Cardiac septum (tissue), 1 donor: ENCODE measurements at regions of chr20 and their contacts with region 1.

Region 1: GRCh38 chr20:815914-816606 is 17.5 kb upstream of the FAM110A start:
- DNase-seq: no peak

Region 2: DNA sequence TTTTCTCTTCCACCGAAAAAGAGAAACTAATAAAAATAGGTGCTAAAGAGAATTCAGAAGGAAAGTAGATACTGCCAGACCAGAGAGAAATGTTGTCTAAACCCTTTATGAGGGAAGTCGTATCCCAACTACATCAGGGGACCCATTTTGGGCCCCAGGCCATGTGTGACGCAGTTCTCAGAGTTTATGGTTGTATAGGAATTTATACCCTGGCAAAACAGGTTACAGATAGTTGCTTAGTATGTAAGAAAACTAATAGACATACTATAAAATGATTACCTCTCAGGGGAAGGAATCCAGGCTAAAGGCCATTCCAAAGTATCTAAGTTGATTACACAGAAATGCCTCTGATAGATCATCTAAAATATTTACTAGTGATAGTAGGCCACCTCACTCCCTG is 19.1 kb before region 1 on chr20:
- intact Hi-C with region 1: no loop called
- DNase-seq: no peak

Region 3: GRCh38 chr20:891058-891705 is 75.1 kb after region 1 on chr20:
- intact Hi-C with region 1: loop called (anchors 5 kb)
- DNase-seq: no peak

Region 4: GRCh38 chr20:956330-956951 is 140.4 kb after region 1 on chr20:
- intact Hi-C with region 1: loop called (anchors 1 kb)
- DNase-seq: peak; percentile 84

Region 5: DNA sequence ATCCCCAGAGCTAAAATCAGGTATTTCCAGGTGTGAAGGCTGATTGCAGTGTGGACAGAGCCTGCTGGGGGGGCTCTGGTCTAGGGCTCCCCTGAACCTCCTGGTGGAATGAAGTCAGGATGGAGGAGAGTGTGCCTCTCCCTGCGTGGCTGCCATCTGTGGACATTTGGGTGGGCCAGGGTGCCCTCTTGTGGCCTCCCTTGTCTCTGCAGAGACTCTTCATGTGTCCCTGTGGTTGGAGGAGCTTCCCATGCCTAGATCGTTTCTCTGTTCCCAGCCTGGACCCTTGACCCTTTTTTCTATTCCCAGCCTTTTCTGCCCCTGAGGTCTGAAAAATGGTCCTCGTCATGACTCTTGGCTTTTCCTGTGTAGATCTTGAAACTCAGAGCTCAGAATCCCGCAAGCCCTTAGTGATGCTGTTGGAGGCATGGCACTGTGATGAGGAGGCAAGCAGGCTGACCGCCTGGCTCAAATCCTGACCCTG is 292.4 kb after region 1 on chr20:
- intact Hi-C with region 1: loop called (anchors 10 kb)
- DNase-seq: no peak

Region 6: GRCh38 chr20:1187605-1188171 is 371.6 kb after region 1 on chr20:
- intact Hi-C with region 1: no loop called
- DNase-seq: no peak

Region 7: GRCh38 chr20:1212607-1213396 is 396.7 kb after region 1 on chr20:
- intact Hi-C with region 1: loop called (anchors 5 kb)
- DNase-seq: peak; percentile 84